Aorta (tissue), 5 donors: ENCODE measurements at regions of chr12 and their contacts with region 1.

Region 1: DNA sequence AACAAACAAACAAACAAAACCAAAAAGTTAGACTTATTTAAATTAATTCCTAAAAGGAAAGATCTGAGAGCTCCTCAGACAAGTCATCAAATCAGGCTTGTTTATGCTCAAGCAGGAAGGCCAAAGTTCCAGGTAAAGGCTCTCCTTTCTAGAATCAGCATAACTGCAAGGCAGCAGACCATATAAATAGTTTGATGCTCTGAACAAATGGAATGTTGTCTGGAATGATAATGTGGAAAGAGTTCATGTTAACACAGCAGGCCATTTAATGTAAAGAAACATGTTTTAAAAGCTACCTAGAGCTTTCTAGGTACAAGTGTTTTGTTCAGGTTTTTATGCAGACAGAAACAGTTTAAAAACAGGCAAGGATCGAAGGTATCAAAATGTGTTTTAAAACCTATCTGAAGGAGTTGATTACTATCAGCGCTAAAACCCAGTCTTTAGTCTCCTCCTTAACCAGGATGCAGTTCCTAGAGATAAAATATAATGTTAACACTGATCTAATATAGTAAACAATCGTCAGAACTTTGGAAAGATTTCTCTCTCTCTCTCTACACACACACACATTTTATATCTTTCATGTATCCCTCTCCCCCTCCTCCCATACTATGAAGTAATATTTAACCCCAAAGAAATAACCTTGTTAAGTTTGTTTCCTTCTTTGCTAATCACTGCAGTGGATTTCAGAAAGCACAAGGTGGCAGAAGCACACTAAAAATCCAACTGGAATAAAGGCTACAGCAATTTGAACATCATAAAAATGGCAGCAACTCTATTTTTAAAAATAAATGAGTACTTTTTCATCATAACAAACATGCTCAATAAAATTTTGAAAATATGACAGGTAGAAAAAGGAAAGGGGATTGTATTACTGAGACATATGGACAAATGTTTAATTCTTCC is 135.5 kb downstream of the PAWR start:
- DNase-seq: no peak
- ATAC-seq: no peak
- H3K4me3 ChIP-seq: no peak overlapping the region
- H3K27ac ChIP-seq: no peak overlapping the region
- H3K4me1 ChIP-seq: peaks cover 2 to 7% of the 10 kb centered on the region in 2 donors
- H3K27me3 ChIP-seq: no peaks in the 10 kb centered on the region

Region 2: GRCh38 chr12:78824918-78825317 is 730.4 kb before region 1 on chr12:
- intact Hi-C with region 1: no loop called
- DNase-seq: no peak
- ATAC-seq: no peak
- H3K4me3 ChIP-seq: no peak overlapping the region
- H3K27ac ChIP-seq: no peak overlapping the region
- H3K4me1 ChIP-seq: no peaks in the 10 kb centered on the region
- H3K27me3 ChIP-seq: no peaks in the 10 kb centered on the region

Region 3: GRCh38 chr12:79407671-79408622 is 147.3 kb before region 1 on chr12:
- intact Hi-C with region 1: loop called in 1 of 2 experiments (anchors 5 kb)
- DNase-seq: peak in 1 of 2 donors; percentile 50
- ATAC-seq: peak; percentile 86
- H3K4me3 ChIP-seq: no peak overlapping the region
- H3K27ac ChIP-seq: peak overlapping the region; percentile 57 to 90
- H3K4me1 ChIP-seq: peaks cover 2 to 3% of the 10 kb centered on the region in 2 donors
- H3K27me3 ChIP-seq: no peaks in the 10 kb centered on the region

Region 4: GRCh38 chr12:79737875-79738718 is 182.8 kb after region 1 on chr12:
- intact Hi-C with region 1: loop called (anchors 5 kb)
- DNase-seq: no peak
- ATAC-seq: no peak
- H3K4me3 ChIP-seq: no peak overlapping the region
- H3K27ac ChIP-seq: no peak overlapping the region
- H3K4me1 ChIP-seq: no peaks in the 10 kb centered on the region
- H3K27me3 ChIP-seq: no peaks in the 10 kb centered on the region

Region 5: GRCh38 chr12:79935021-79935623 is 379.8 kb after region 1 on chr12 and contains the start of gene PPP1R12A:
- intact Hi-C with region 1: loop called (anchors 10 kb)
- DNase-seq: peak; percentile 99
- ATAC-seq: peak; percentile 99
- H3K4me3 ChIP-seq: peak within 1 kb of the TSS; percentile 80 to 97
- H3K27ac ChIP-seq: peak within 1 kb of the TSS; percentile 91 to 96
- H3K4me1 ChIP-seq: peaks cover 0 to 2% of the 10 kb centered on the region in 2 donors
- H3K27me3 ChIP-seq: no peaks in the 10 kb centered on the region
- total RNA-seq, gene PPP1R12A: 194 to 287 TPM

Region 6: DNA sequence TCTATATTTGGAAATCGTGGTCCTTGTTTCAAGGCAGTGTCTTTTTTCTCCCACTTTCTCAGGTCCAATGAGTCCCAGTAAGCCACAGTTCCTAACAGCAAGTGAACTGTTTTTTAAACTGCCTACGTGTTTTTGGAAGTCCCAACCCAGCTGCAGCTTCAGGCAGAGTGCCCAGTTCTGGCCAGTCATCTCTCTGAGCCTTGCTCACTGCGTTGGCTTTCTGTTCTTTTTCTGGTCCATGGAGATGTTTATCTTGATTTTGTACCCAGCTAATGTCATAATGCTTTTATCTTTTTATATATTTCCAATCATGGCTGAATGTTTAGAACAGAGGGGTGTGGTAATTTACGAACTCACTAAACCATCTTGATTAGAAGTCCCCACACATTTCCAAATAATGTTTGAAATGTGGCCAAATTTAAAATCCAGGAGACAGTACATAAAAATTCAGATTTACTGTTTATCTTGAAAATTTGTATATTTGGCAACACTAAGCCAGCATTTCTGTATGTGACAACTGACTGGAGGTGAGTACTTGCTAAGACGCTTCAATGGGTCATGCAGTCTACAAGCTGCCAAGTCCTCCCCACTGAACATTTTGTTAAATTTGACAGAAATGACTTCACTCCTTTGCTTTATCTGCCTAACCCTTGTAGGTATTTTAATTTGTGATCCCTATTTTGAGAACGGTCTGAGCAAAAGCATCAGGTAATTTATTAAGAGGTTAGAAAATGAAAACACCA is 497.9 kb after region 1 on chr12:
- intact Hi-C with region 1: loop called (anchors 10 kb)
- DNase-seq: peak; percentile 91 to 93
- ATAC-seq: peak; percentile 86
- H3K4me3 ChIP-seq: peak overlapping the region in 1 of 2 donors; percentile 15
- H3K27ac ChIP-seq: peak overlapping the region in 1 of 2 donors; percentile 57
- H3K4me1 ChIP-seq: no peaks in the 10 kb centered on the region
- H3K27me3 ChIP-seq: no peaks in the 10 kb centered on the region

Region 7: GRCh38 chr12:80269803-80270552 is 714.7 kb after region 1 on chr12:
- intact Hi-C with region 1: loop called (anchors 10 kb)
- DNase-seq: no peak
- ATAC-seq: peak; percentile 72
- H3K4me3 ChIP-seq: peak overlapping the region in 1 of 2 donors; percentile 14
- H3K27ac ChIP-seq: no peak overlapping the region
- H3K4me1 ChIP-seq: no peaks in the 10 kb centered on the region
- H3K27me3 ChIP-seq: no peaks in the 10 kb centered on the region